Activated CD4-positive, alpha-beta T cell treated with anti-CD3 and anti-CD28 coated beads for 36 hours (primary cell): ENCODE measurements at regions of chr10 and their contacts with region 1.

Region 1: GRCh38 chr10:119080521-119081260 is at the start of gene EIF3A:
- DNase-seq: peak; percentile 95
- ATAC-seq: peak; percentile 82
- H3K4me3 Mint-ChIP-seq: peak within 1 kb of the TSS; percentile 99
- H3K27ac Mint-ChIP-seq: peak within 1 kb of the TSS; percentile 94
- H3K4me1 Mint-ChIP-seq: peaks cover 26% of the 10 kb centered on the region
- H3K27me3 Mint-ChIP-seq: no peaks in the 10 kb centered on the region
- total RNA-seq, gene EIF3A: 132 to 150 TPM

Region 2: GRCh38 chr10:119039161-119039560 is 41.5 kb before region 1 on chr10:
- CTCF ChIA-PET with region 1: no interaction called
- POLR2A ChIA-PET with region 1: no interaction called
- intact Hi-C with region 1: loop called in 1 of 2 experiments (anchors 5 kb)
- DNase-seq: no peak
- ATAC-seq: no peak
- H3K4me3 Mint-ChIP-seq: no peak overlapping the region
- H3K27ac Mint-ChIP-seq: no peak overlapping the region
- H3K4me1 Mint-ChIP-seq: peaks cover 2% of the 10 kb centered on the region
- H3K27me3 Mint-ChIP-seq: no peaks in the 10 kb centered on the region

Region 3: GRCh38 chr10:119131512-119132240 is 51.0 kb after region 1 on chr10:
- CTCF ChIA-PET with region 1: interaction called, 4 read pairs
- POLR2A ChIA-PET with region 1: interaction called, 7 read pairs
- intact Hi-C with region 1: loop called (anchors 1 kb)
- DNase-seq: peak; percentile 75
- ATAC-seq: peak; percentile 84
- H3K4me3 Mint-ChIP-seq: peak overlapping the region; percentile 78
- H3K27ac Mint-ChIP-seq: peak overlapping the region; percentile 99
- H3K4me1 Mint-ChIP-seq: peaks cover 50% of the 10 kb centered on the region
- H3K27me3 Mint-ChIP-seq: no peaks in the 10 kb centered on the region

Region 4: GRCh38 chr10:119178372-119179119 is 97.9 kb after region 1 on chr10 and contains the start of gene PRDX3:
- CTCF ChIA-PET with region 1: no interaction called
- POLR2A ChIA-PET with region 1: no interaction called
- intact Hi-C with region 1: loop called (anchors 1 to 2 kb)
- DNase-seq: peak; percentile 98
- ATAC-seq: peak; percentile 95
- H3K4me3 Mint-ChIP-seq: peak within 1 kb of the TSS; percentile 88
- H3K27ac Mint-ChIP-seq: peak within 1 kb of the TSS; percentile 95
- H3K4me1 Mint-ChIP-seq: peaks cover 36% of the 10 kb centered on the region
- H3K27me3 Mint-ChIP-seq: no peaks in the 10 kb centered on the region
- total RNA-seq, gene PRDX3: 160 to 217 TPM

Region 5: DNA sequence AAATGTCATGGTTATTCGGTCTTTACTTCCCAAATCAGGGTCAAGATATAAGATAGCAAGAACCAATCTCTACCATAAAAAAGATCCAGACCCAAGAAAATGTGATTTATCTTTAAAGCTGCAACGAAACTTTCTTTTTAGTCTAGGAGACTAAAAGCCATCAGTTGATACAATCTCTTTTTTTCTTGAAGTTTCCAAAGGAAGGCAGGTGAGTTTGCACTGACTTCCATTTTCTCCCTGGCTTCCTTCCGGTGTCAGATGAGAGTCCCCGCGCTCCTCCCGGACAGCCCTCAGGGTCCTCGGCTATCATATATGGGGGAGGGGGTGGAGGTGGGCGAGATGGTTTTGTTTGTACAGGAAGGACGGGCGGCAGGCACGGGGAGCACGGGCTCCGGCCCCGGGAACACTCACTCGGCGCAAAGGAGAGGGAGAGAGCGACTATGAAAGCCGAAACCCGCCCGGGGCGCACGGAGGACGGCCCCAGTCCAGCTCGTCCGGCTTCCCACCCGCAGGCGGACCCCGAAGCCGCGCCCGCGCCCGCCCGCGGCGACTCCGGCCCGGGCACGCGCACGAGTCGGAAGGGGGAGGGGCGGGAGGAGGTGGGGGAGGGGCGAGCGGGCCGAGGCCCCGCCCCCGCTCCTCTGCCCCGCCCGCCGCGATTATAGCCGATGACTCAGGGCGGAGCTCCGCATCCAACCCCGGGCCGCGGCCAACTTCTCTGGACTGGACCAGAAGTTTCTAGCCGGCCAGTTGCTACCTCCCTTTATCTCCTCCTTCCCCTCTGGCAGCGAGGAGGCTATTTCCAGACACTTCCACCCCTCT is 570.2 kb after region 1 on chr10 and contains the start of gene BAG3:
- CTCF ChIA-PET with region 1: no interaction called
- POLR2A ChIA-PET with region 1: no interaction called
- intact Hi-C with region 1: loop called in 1 of 2 experiments (anchors 2 kb)
- DNase-seq: peak; percentile 91
- ATAC-seq: peak; percentile 48
- H3K4me3 Mint-ChIP-seq: peak within 1 kb of the TSS; percentile 84
- H3K27ac Mint-ChIP-seq: peak within 1 kb of the TSS; percentile 95
- H3K4me1 Mint-ChIP-seq: peaks cover 39% of the 10 kb centered on the region
- H3K27me3 Mint-ChIP-seq: no peaks in the 10 kb centered on the region
- total RNA-seq, gene BAG3: 23.8 to 30.7 TPM

Region 6: DNA sequence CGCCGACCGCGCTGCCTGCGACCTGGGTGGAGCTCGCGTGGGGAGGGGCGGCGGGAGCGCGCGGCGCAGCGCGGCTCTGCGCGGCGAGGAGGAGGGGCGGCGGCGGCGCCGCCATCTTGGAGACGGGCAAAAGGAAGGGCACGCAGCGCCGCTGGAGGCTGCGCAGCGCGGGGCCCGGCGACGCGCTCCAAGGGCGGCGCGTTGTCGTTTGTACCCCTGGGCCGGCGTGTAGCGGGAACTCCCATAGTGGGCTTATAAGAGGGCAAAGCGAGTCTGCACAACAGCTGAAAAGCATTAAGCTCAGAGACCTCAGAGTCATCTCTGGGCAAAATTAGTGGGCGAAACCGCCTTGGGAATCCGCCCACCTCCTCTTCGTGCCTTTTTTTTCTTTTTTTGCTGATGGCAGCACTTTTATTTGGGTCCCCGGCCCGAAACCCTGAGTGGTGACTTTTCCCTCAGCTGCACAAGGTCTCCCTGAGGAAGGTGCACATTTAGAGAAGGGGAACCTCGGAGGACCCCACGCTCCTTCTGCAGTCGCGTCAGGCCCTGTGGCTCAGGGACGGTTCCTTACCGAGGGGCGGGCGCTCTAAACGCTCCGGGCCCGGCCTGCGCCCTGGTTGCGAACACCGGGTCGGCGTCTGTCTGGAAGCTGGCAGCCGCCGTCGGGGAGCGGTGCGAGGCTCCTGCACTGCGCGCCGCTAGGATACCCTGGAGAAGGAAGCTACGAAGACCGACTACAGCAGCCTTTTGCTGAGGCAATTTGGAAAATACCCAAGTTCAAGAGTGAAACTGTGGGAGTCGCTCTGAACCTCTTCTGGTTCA is 792.4 kb after region 1 on chr10:
- CTCF ChIA-PET with region 1: no interaction called
- POLR2A ChIA-PET with region 1: no interaction called
- intact Hi-C with region 1: loop called in 1 of 2 experiments (anchors 2 kb)
- DNase-seq: peak; percentile 94
- ATAC-seq: peak; percentile 95
- H3K4me3 Mint-ChIP-seq: peak overlapping the region; percentile 79
- H3K27ac Mint-ChIP-seq: peak overlapping the region; percentile 87
- H3K4me1 Mint-ChIP-seq: peaks cover 33% of the 10 kb centered on the region
- H3K27me3 Mint-ChIP-seq: no peaks in the 10 kb centered on the region